Dendritic cell treated with granulocyte-macrophage colony-stimulating factor and Interleukin-4, amounts not matched to agents 40 ng/mL and 50 ng/mL, for 4 days (primary cell): ENCODE measurements at regions of chr1 and their contacts with region 1.

Region 1: DNA sequence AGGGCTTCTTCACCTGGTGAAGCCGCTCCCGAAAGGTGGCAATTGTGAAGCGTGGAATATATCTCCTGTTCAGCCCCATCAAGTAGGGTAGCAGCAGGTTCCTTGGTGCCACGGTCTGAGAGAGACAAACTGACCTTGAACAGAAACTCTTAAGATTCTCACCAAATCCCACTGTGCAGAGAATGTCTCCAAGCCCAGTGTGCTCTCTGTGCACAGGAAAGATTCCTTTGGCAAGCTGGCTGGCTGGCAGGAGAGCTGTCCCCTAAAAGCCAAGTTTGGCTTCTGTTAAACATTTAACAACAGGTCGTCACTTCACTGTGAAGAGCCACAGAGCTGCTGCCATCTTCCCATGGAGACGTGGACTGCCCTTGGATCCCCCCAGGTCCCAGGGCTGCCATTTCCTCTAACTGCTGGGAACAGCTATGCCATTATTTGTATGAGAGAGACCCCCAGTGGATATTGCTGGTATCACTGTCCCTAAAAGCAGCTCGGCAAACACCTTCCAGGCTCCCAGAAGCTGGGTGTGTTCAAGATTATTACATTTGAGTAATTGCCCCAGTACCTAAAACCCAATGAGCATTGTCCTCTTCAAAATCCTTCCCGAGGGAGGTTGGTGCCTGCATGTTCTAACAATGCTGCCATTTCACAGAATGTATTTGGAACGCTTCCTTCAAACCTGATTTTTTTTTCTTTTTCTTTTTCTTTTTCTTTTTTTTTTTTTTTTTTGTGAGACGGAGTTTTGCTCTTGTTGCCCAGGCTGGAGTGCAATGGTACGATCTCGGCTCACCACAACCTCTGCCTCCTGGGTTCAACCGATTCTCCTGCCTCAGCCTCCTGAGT is 71.8 kb downstream of the CD58 start:
- H3K4me3 Mint-ChIP-seq: no peak overlapping the region
- H3K27ac Mint-ChIP-seq: peak overlapping the region; percentile 15
- H3K4me1 Mint-ChIP-seq: peaks cover 82% of the 10 kb centered on the region
- H3K27me3 Mint-ChIP-seq: no peaks in the 10 kb centered on the region

Region 2: GRCh38 chr1:116151739-116152576 is 347.1 kb before region 1 on chr1:
- intact Hi-C with region 1: loop called (anchors 5 kb)
- H3K4me3 Mint-ChIP-seq: peak overlapping the region; percentile 61
- H3K27ac Mint-ChIP-seq: peak overlapping the region; percentile 62
- H3K4me1 Mint-ChIP-seq: peaks cover 6% of the 10 kb centered on the region
- H3K27me3 Mint-ChIP-seq: peaks cover 16% of the 10 kb centered on the region

Region 3: DNA sequence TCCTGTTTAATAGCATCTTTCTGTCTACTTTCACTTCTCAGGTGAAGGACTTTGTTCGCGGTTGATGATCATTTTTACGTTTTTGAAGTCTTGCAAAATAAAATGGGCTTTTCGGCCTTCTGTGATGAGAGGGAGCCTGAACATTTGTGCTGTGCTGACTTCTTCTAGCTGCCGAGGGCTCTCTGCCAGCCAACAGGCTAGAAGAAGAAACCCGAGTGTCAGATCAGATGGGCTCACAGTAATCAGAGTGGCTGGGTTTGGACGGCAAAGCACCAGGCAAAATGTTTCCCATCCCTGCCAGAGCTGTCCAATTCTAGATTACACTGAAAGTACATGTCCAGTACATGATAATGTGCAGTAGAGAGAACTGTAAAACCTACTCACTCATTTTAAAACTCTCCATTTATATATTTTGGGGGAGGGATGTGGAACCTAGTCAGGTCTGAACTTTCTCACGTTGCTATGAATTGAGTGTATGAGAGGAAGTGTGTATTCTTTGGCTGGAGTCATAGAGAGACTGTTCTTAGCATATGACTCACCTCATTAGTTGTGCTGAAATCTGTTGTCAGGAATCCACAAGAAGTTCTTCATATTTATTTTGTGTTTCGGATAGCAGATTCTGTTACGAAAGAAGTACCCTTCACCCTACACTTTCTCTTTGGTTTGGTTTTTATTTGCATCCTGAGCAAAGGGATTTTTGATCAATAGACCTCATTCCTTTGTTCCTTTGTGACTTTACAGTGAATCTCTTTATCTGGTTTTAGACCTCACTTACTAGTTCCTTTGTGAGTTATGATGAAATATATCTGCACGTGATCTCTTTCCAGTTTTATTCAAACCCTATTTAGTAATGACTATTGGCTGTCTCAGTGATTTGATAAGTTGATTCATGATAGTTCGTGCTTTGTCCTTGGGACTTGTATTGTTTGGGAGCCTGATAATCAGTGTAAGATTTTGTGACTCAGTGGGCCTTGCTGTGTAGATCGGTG is 121.2 kb before region 1 on chr1:
- intact Hi-C with region 1: loop called (anchors 5 kb)
- H3K4me3 Mint-ChIP-seq: peak overlapping the region; percentile 43
- H3K27ac Mint-ChIP-seq: peak overlapping the region; percentile 63
- H3K4me1 Mint-ChIP-seq: peaks cover 67% of the 10 kb centered on the region
- H3K27me3 Mint-ChIP-seq: no peaks in the 10 kb centered on the region

Region 4: GRCh38 chr1:116570358-116571200 is 71.6 kb after region 1 on chr1 and contains the start of gene CD58:
- intact Hi-C with region 1: no loop called
- H3K4me3 Mint-ChIP-seq: peak within 1 kb of the TSS; percentile 79
- H3K27ac Mint-ChIP-seq: peak within 1 kb of the TSS; percentile 95
- H3K4me1 Mint-ChIP-seq: peaks cover 78% of the 10 kb centered on the region
- H3K27me3 Mint-ChIP-seq: no peaks in the 10 kb centered on the region

Region 5: GRCh38 chr1:117146570-117147346 is 647.7 kb after region 1 on chr1:
- intact Hi-C with region 1: no loop called
- H3K4me3 Mint-ChIP-seq: no peak overlapping the region
- H3K27ac Mint-ChIP-seq: no peak overlapping the region
- H3K4me1 Mint-ChIP-seq: no peaks in the 10 kb centered on the region
- H3K27me3 Mint-ChIP-seq: peaks cover 6% of the 10 kb centered on the region

Region 6: GRCh38 chr1:117605774-117606648 is 1107.0 kb after region 1 on chr1 and contains the start of gene TENT5C:
- intact Hi-C with region 1: loop called (anchors 10 kb)
- H3K4me3 Mint-ChIP-seq: peak within 1 kb of the TSS; percentile 89
- H3K27ac Mint-ChIP-seq: peak within 1 kb of the TSS; percentile 69
- H3K4me1 Mint-ChIP-seq: peaks cover 23% of the 10 kb centered on the region
- H3K27me3 Mint-ChIP-seq: peaks cover 58% of the 10 kb centered on the region